GM12878 (cell line): ENCODE measurements at regions of chr1 and their contacts with region 1.

Region 1: GRCh38 chr1:28736450-28737306 is at the start of gene YTHDF2:
- DNase-seq: peak; percentile 78
- ATAC-seq: peak; percentile 95
- H3K4me3 ChIP-seq: peak within 1 kb of the TSS; percentile 100
- H3K27ac ChIP-seq: peak within 1 kb of the TSS; percentile 92
- H3K4me1 ChIP-seq: peaks cover 7% of the 10 kb centered on the region; the same call in 1 of the 2 replicates
- H3K27me3 ChIP-seq: no peaks in the 10 kb centered on the region
- CTCF ChIP-seq: peak; percentile 83 to 89 (median 88)
- EP300 ChIP-seq: peak in 1 of 2 experiments; percentile 24; a peak in 1 of 4 replicates
- POLR2A ChIP-seq: peak; percentile 94
- RAD21 ChIP-seq: 0 out of 2 replicates have a peak, but pooled peaks have one; percentile 7
- polyA plus RNA-seq, gene YTHDF2: 42.4 to 44.0 TPM

Region 2: GRCh38 chr1:28510665-28511440 is 225.8 kb before region 1 on chr1:
- CTCF ChIA-PET with region 1: no interaction called
- POLR2A ChIA-PET with region 1: interaction called, 3 read pairs
- RAD21 ChIA-PET with region 1: no interaction called
- SMC1A ChIA-PET with region 1: no interaction called
- in situ Hi-C with region 1: no loop called
- intact Hi-C with region 1: loop called (anchors 5 kb)
- DNase-seq: no peak
- ATAC-seq: peak; percentile 11
- H3K4me3 ChIP-seq: peak overlapping the region; percentile 84
- H3K27ac ChIP-seq: peak overlapping the region; percentile 94
- H3K4me1 ChIP-seq: peaks cover 10% of the 10 kb centered on the region
- H3K27me3 ChIP-seq: no peaks in the 10 kb centered on the region
- CTCF ChIP-seq: no peak
- EP300 ChIP-seq: no peak
- POLR2A ChIP-seq: peak; percentile 67
- RAD21 ChIP-seq: no peak

Region 3: DNA sequence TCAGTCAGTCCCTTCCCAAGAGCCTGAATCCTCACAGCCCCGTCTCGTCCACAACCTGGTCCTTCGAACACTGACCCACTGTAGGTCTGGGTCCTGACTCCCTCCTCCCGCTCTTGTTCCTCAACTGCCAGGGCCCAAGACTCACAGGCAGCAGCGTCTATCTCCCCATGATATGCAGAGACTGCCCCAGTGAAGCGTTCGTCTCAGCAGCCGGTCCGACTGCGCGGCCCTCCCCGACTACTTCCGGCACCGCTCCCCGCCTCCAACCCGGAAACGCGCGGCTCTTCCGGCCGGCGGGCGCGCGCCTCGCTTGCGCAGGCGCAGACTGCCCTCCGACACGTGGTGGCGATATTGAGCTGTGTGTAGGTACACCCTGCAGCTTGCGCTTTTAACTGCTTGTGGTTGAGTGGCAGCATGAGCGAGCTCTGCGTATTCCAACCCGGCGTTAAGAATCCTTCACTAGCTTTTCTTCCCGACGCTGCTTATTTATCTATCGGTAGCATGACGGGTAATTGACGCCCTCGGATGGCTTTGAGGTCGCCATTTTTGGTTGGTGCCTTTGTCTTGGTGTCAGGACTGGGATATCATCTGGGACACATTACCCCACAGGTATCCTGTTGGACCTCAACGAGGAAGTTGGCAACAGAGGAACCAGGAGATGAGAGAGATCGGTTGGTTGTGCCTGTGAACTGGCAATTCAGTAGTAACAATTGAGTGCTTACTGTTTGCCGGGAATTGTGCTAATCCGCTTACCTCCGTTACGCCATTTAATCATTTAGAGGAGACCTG is 93.6 kb before region 1 on chr1 and contains the start of gene TAF12:
- CTCF ChIA-PET with region 1: interaction called, 18 read pairs
- POLR2A ChIA-PET with region 1: interaction called, 24 read pairs
- RAD21 ChIA-PET with region 1: interaction called, 20 read pairs
- SMC1A ChIA-PET with region 1: interaction called, 17 read pairs
- in situ Hi-C with region 1: no loop called
- intact Hi-C with region 1: loop called (anchors 1 kb)
- DNase-seq: peak; percentile 93
- ATAC-seq: peak; percentile 90
- H3K4me3 ChIP-seq: peak within 1 kb of the TSS; percentile 92
- H3K27ac ChIP-seq: peak within 1 kb of the TSS; percentile 90
- H3K4me1 ChIP-seq: peaks cover 13% of the 10 kb centered on the region
- H3K27me3 ChIP-seq: no peaks in the 10 kb centered on the region
- CTCF ChIP-seq: peak; percentile 32 to 73 (median 42); a peak in 4 of 6 replicates
- EP300 ChIP-seq: 0 out of 4 replicates have a peak, but pooled peaks of 1 of the 2 experiments have one; percentile 31
- POLR2A ChIP-seq: peak; percentile 99
- RAD21 ChIP-seq: peak; percentile 49
- polyA plus RNA-seq, gene TAF12: 34.3 to 41.9 TPM

Region 4: DNA sequence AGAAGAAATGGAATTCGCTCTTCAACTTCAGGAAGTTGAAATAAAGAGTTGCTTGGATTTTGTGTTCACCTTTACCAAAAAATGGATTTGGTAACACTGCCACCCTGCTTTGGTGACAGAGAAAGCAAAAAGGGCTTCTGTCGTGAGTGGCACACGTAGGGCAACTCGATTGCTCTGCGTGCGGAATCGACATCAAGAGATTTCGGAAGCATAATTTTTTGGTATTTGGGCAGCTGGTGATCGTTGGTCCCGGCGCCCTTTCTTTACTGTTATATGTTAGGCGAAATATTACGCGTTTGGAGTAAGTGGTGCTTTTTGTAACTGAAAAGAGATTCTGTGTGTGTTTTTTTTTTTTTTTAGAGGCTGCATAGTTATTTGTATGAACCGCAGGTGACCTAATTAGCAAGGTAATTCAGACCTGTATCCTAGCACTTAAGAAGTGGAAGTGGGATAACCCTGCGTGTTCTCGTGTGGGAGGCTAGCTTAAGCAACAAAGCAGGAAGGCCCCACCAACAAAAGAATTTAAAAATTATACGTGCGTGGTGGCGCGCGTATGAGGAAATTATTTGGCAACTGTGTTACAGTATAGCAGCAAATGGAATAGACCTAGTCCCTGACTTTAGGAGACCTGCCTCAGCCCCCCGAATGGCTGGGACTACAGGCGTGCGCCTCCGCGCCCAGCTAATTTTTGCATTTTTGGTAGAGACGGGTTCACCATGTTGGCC is 88.0 kb before region 1 on chr1 and contains the start of gene RNU11:
- CTCF ChIA-PET with region 1: interaction called, 18 read pairs
- POLR2A ChIA-PET with region 1: interaction called, 24 read pairs
- RAD21 ChIA-PET with region 1: interaction called, 20 read pairs
- SMC1A ChIA-PET with region 1: interaction called, 17 read pairs
- in situ Hi-C with region 1: no loop called
- intact Hi-C with region 1: loop called (anchors 1 kb)
- DNase-seq: peak; percentile 97
- ATAC-seq: peak; percentile 85
- H3K4me3 ChIP-seq: peak within 1 kb of the TSS; percentile 55; the same call in 1 of the 2 replicates
- H3K27ac ChIP-seq: peak within 1 kb of the TSS; percentile 99
- H3K4me1 ChIP-seq: peaks cover 11% of the 10 kb centered on the region
- H3K27me3 ChIP-seq: no peaks in the 10 kb centered on the region
- CTCF ChIP-seq: no peak
- EP300 ChIP-seq: 0 out of 4 replicates have a peak, but pooled peaks have one; percentile 37 to 54
- POLR2A ChIP-seq: peak; percentile 97
- RAD21 ChIP-seq: no peak
- polyA plus RNA-seq, gene RNU11: not detected

Region 5: GRCh38 chr1:28668191-28668955 is 68.3 kb before region 1 on chr1 and contains the start of gene GMEB1:
- CTCF ChIA-PET with region 1: interaction called, 15 read pairs
- POLR2A ChIA-PET with region 1: interaction called, 20 read pairs
- RAD21 ChIA-PET with region 1: interaction called, 4 read pairs
- SMC1A ChIA-PET with region 1: interaction called, 8 read pairs
- in situ Hi-C with region 1: no loop called
- intact Hi-C with region 1: loop called (anchors 1 kb)
- DNase-seq: peak; percentile 34
- ATAC-seq: peak; percentile 84
- H3K4me3 ChIP-seq: peak within 1 kb of the TSS; percentile 100
- H3K27ac ChIP-seq: peak within 1 kb of the TSS; percentile 99
- H3K4me1 ChIP-seq: no peaks in the 10 kb centered on the region
- H3K27me3 ChIP-seq: no peaks in the 10 kb centered on the region
- CTCF ChIP-seq: 0 out of 6 replicates have a peak, but pooled peaks of 1 of the 3 experiments have one; percentile 4
- EP300 ChIP-seq: no peak
- POLR2A ChIP-seq: 0 out of 2 replicates have a peak, but pooled peaks have one; percentile 6
- RAD21 ChIP-seq: no peak
- polyA plus RNA-seq, gene GMEB1: 4.9 to 7.5 TPM

Region 6: GRCh38 chr1:28751315-28752060 is 14.8 kb after region 1 on chr1:
- CTCF ChIA-PET with region 1: interaction called, 16 read pairs
- POLR2A ChIA-PET with region 1: interaction called, 9 read pairs
- RAD21 ChIA-PET with region 1: interaction called, 14 read pairs
- SMC1A ChIA-PET with region 1: interaction called, 8 read pairs
- in situ Hi-C with region 1: no loop called
- intact Hi-C with region 1: no loop called
- DNase-seq: no peak
- ATAC-seq: no peak
- H3K4me3 ChIP-seq: no peak overlapping the region
- H3K27ac ChIP-seq: no peak overlapping the region
- H3K4me1 ChIP-seq: peaks cover 4% of the 10 kb centered on the region; the same call in 1 of the 2 replicates
- H3K27me3 ChIP-seq: no peaks in the 10 kb centered on the region
- CTCF ChIP-seq: no peak
- EP300 ChIP-seq: no peak
- POLR2A ChIP-seq: no peak
- RAD21 ChIP-seq: no peak

Region 7: DNA sequence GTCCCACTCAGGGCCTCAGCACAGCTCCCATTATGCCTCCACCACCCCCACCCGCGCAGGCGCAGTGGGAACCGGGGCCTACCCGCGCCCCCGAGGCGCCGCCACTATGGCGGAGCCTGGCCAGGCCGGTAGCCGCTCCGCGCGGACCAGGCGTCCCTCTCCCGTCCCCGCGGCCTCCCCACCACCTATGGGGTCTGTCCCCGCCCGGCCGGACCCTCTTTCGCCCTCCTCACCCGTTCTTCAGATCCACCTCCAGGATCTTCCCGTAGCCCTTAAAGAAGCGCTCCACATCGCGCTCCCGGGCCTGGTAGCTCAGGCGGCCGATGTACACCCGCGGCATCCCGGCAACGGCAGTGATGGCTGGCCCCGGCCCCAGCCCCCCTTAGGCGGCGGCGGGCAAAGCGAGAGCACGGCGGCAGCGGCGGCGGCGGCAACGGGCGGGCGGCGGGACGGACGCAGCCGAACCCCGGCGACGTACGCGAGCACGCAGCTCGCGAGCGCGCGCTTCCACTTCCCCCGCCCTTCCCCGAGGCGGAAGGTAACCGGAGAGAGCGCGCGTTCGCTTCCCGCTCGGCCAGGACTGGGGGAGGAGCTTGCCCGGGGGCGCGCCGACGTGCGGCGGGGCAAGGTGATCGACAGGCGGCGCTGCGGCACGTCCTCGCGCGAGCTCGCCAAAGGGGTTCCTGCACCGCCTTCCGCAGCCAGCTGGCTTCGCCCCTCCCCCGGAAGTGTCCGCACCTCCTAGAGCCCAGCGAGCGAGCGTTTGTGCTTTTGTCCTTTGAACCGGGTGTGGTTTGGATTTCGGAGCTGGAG is 444.9 kb after region 1 on chr1 and contains the start of gene SRSF4:
- CTCF ChIA-PET with region 1: no interaction called
- POLR2A ChIA-PET with region 1: interaction called, 5 read pairs
- RAD21 ChIA-PET with region 1: no interaction called
- SMC1A ChIA-PET with region 1: interaction called, 4 read pairs
- in situ Hi-C with region 1: no loop called
- intact Hi-C with region 1: loop called (anchors 2 kb)
- DNase-seq: peak; percentile 94
- ATAC-seq: peak; percentile 93
- H3K4me3 ChIP-seq: peak within 1 kb of the TSS; percentile 97
- H3K27ac ChIP-seq: peak within 1 kb of the TSS; percentile 99
- H3K4me1 ChIP-seq: no peaks in the 10 kb centered on the region; the same call in none of the 2 replicates
- H3K27me3 ChIP-seq: no peaks in the 10 kb centered on the region
- CTCF ChIP-seq: peak; percentile 55 to 95 (median 63); a peak in 4 of 6 replicates
- EP300 ChIP-seq: no peak
- POLR2A ChIP-seq: peak; percentile 85
- RAD21 ChIP-seq: no peak
- polyA plus RNA-seq, gene SRSF4: 17.2 to 26.4 TPM